Endothelial cell of umbilical vein (primary cell): ENCODE measurements at regions of chr10 and their contacts with region 1.

Region 1: DNA sequence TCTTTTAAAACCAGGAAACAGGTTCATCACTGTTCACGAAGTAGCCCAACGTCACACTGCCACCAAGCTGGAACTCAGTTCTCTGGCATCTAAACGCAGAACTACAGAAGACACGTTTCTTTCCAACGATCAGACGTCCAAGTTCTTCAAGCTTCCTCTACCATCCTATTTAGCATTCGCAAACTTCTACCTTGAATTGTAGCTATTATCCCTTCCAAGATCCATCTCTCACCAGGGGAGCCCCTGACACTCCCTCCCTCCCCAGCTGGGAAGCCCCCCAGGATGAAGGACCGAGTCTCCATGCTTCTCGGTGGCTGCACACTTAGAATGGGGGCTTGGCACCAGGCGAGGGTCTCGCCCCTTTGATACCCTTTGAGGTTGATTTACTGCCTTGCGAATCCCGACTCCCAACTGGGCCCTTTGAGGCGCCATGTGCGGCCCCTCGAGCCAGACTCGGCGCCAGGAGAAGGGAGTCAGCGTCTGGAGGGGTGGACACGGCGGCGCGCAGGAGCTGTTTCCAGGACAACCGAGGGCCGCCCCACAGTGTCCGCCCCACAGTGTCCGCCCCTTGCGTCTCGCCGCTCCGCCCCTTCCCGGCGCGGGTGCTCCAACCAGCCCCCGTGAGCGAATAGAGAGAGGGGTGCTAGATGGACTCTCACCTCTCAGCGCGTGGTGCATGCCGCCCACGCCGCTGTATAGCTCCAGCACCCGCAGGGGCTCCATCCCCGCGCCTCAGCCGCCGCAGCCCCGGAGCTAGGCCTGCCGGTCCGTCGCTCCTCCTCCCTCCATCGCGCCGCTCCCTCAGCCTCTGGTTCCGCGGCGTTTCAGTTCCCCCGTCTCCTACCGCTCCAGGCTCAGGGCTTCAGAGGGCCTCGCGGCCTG is at the start of gene TRDMT1:
- DNase-seq: peak; percentile 91
- H3K4me3 ChIP-seq: peak within 1 kb of the TSS; percentile 69 to 95 (median 91)
- H3K27ac ChIP-seq: peak within 1 kb of the TSS; percentile 100
- H3K4me1 ChIP-seq: peaks cover 28% of the 10 kb centered on the region
- H3K27me3 ChIP-seq: no peaks in the 10 kb centered on the region
- CTCF ChIP-seq: no peak
- POLR2A ChIP-seq: peak; percentile 86
- total RNA-seq, gene TRDMT1: 12.3 and 15.2 TPM in 2 replicates

Region 2: GRCh38 chr10:16843252-16843870 is 357.8 kb before region 1 on chr10:
- CTCF ChIA-PET with region 1: interaction called, 3 read pairs
- POLR2A ChIA-PET with region 1: no interaction called
- dilution Hi-C with region 1: no loop called
- intact Hi-C with region 1: loop called (anchors 1 kb)
- DNase-seq: peak; percentile 83
- H3K4me3 ChIP-seq: no peak overlapping the region
- H3K27ac ChIP-seq: peak overlapping the region; percentile 32
- H3K4me1 ChIP-seq: peaks cover 2% of the 10 kb centered on the region
- H3K27me3 ChIP-seq: no peaks in the 10 kb centered on the region
- CTCF ChIP-seq: peak; percentile 19 to 27
- POLR2A ChIP-seq: no peak

Region 3: GRCh38 chr10:17029581-17030271 is 171.4 kb before region 1 on chr10:
- CTCF ChIA-PET with region 1: interaction called, 4 read pairs
- POLR2A ChIA-PET with region 1: no interaction called
- dilution Hi-C with region 1: no loop called
- intact Hi-C with region 1: loop called (anchors 1 kb)
- DNase-seq: peak; percentile 96
- H3K4me3 ChIP-seq: peak overlapping the region in 1 of 3 experiments; percentile 34
- H3K27ac ChIP-seq: peak overlapping the region; percentile 99
- H3K4me1 ChIP-seq: peaks cover 59% of the 10 kb centered on the region
- H3K27me3 ChIP-seq: no peaks in the 10 kb centered on the region
- CTCF ChIP-seq: no peak
- POLR2A ChIP-seq: peak; percentile 71

Region 4: DNA sequence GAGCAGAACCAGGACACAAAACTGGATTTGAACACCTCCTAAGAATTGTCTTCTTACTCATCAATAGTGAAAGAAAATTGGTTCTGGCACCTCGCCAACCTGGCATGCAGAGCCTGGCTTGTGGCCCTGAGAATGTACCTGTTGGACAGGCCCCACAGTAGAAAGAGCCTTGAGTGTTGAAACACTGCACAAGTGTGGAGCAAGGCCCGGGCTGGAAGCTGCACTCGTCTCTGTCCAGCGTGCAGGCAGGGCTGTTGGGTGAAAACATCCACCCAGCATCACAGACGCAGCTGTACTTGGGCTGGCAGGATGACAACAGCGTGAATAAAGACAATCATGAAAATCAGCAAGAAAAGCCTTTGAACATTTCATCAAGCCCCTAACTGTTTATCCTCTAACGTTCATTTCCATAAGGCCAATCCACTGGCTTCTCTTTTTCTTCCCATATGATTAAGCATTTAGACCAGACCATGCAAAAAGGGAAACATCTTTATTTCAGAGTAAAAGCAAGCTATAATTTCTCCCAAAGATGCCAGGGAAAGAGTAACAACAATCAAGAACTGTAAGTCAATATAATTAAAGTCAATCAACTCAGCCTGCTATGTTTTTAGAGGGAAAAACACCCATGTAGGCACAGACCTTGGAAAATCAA is 87.1 kb before region 1 on chr10:
- CTCF ChIA-PET with region 1: interaction called, 12 read pairs
- POLR2A ChIA-PET with region 1: no interaction called
- dilution Hi-C with region 1: no loop called
- intact Hi-C with region 1: no loop called
- DNase-seq: peak; percentile 46
- H3K4me3 ChIP-seq: no peak overlapping the region
- H3K27ac ChIP-seq: no peak overlapping the region
- H3K4me1 ChIP-seq: peaks cover 20% of the 10 kb centered on the region
- H3K27me3 ChIP-seq: no peaks in the 10 kb centered on the region
- CTCF ChIP-seq: no peak
- POLR2A ChIP-seq: no peak

Region 5: DNA sequence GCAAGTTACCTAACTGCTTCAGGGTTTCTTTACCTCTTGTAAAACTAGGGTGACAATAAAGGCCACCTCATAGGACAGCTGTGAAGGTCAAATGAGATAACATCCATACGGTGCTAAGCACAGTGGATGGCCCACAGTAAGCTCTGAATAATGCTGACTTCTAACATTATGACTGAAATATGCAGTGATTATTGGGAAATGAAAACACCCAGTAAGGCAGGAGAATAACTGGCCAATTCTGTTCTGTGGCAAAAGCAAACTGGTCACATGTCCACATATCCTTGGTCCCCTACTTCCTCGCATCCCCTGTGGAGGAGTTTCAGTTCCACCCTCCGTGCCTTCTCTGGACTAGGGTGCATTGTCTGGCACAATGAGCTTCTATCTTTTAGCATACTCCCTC is 72.9 kb before region 1 on chr10:
- CTCF ChIA-PET with region 1: no interaction called
- POLR2A ChIA-PET with region 1: no interaction called
- dilution Hi-C with region 1: no loop called
- intact Hi-C with region 1: no loop called
- DNase-seq: no peak
- H3K4me3 ChIP-seq: no peak overlapping the region
- H3K27ac ChIP-seq: no peak overlapping the region
- H3K4me1 ChIP-seq: no peaks in the 10 kb centered on the region
- H3K27me3 ChIP-seq: no peaks in the 10 kb centered on the region
- CTCF ChIP-seq: no peak
- POLR2A ChIP-seq: no peak

Region 6: GRCh38 chr10:17216217-17216900 is 15.2 kb after region 1 on chr10:
- CTCF ChIA-PET with region 1: interaction called, 10 read pairs
- POLR2A ChIA-PET with region 1: interaction called, 5 read pairs
- dilution Hi-C with region 1: no loop called
- intact Hi-C with region 1: loop called (anchors 1 kb)
- DNase-seq: peak; percentile 98
- H3K4me3 ChIP-seq: peak overlapping the region in 1 of 3 experiments; percentile 3
- H3K27ac ChIP-seq: peak overlapping the region; percentile 99
- H3K4me1 ChIP-seq: peaks cover 33% of the 10 kb centered on the region
- H3K27me3 ChIP-seq: no peaks in the 10 kb centered on the region
- CTCF ChIP-seq: no peak
- POLR2A ChIP-seq: peak; percentile 77